Aorta (tissue), 5 donors: ENCODE measurements at regions of chr5 and their contacts with region 1.

Region 1: DNA sequence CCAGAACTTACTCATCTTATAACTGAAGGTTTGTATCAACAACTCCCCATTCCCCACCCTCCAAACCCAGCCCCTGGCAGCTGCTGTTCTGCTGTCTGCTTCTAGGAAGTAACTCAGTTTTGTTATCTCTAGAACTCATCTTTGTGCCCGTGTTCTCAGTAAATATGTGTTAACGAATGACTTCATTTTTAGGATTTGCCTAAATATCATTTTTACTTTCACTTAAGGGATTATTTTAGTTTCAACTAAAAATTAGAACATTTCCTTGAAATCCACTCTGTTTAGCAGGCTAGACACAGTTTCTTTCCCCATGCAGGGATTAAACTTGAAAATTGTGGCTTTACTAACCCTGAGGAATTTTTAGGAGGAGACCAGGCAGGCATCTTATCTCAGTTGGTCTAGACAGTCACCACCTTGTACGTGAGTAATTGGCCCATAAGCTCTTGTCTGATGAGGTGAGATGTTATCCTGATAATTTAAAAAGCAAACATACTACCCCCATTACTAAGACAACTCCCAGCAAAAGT is 68.2 kb upstream of the TNFAIP8 start:
- DNase-seq: no peak
- ATAC-seq: no peak
- H3K4me3 ChIP-seq: no peak overlapping the region
- H3K27ac ChIP-seq: peak overlapping the region in 1 of 2 donors; percentile 64
- H3K4me1 ChIP-seq: peaks cover 4 to 9% of the 10 kb centered on the region in 2 donors
- H3K27me3 ChIP-seq: no peaks in the 10 kb centered on the region

Region 2: DNA sequence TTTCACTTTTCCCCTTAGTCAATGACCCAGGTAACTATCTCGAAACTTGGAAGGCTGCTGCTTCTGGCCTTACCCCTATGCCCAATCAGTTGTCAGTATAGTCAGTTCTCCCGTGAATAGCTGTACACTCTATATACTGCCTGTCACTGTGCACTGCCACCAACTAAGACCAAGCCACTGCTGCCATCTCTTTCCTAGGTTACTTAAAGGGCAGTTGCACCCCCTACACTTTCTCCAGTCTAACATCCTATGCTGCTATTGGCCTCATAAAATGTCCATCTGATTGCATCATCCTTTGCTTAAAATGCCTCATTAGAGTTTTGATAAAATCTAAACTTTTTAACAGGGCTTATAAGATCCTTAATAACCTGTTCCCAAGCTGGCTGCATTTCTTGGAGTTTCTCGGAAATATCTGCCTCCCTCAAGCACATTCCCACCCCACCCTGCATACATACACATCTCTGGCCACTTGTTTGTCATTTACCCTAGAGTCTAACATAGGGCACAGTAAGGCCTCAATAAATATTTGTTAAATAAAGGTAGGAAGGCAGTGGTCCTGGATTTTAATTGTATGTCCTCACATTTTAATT is 35.4 kb after region 1 on chr5:
- intact Hi-C with region 1: loop called in 1 of 2 experiments (anchors 5 kb)
- DNase-seq: no peak
- ATAC-seq: no peak
- H3K4me3 ChIP-seq: no peak overlapping the region
- H3K27ac ChIP-seq: peak overlapping the region; percentile 47 to 85
- H3K4me1 ChIP-seq: peaks cover 3 to 4% of the 10 kb centered on the region in 2 donors
- H3K27me3 ChIP-seq: no peaks in the 10 kb centered on the region

Region 3: DNA sequence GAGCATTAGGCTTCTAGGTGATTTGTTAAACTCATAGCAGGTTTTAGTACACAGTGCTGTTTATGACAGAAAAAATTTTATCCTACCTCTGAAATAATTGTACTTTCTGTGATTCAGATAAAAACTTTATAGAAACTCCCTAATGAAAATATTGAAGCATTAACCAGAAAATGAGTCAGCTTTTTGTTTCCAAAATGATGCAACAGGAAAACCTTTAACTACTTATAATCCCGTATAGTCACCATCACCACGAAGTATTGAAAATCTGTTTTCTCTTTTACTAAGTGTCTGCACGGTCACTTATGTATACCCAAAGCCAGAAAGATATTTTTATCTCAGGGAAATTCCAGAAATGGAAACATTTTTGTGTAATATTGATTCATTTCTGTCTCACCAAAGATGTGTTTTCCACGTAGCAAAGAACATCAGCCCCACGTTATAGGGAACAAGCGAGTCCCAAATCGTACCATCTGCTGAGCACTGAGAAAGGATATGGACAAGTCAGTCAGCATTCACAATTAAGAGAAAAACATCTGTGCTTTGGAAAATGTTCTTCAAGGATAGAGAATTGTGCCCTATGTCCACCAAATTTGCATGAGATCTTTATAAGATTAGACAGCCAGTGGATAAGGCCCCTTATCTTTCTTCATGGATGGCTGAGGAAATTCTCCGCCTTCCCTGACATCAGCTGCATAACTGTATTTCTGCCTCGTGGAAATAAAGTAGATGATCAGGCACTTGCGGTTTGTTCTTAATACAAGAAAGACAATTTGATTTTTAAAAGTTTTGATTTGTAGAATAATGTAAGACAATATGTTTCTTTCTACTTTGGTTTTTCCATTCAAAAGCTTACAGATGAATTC is 110.1 kb after region 1 on chr5:
- intact Hi-C with region 1: no loop called
- DNase-seq: no peak
- ATAC-seq: no peak
- H3K4me3 ChIP-seq: no peak overlapping the region
- H3K27ac ChIP-seq: no peak overlapping the region
- H3K4me1 ChIP-seq: no peaks in the 10 kb centered on the region
- H3K27me3 ChIP-seq: no peaks in the 10 kb centered on the region

Region 4: GRCh38 chr5:119435436-119436132 is 148.0 kb after region 1 on chr5:
- intact Hi-C with region 1: no loop called
- DNase-seq: peak; percentile 79 to 83
- ATAC-seq: no peak
- H3K4me3 ChIP-seq: no peak overlapping the region
- H3K27ac ChIP-seq: no peak overlapping the region
- H3K4me1 ChIP-seq: no peaks in the 10 kb centered on the region
- H3K27me3 ChIP-seq: no peaks in the 10 kb centered on the region